PC-3 (cell line): ENCODE measurements at regions of chr2 and their contacts with region 1.

Region 1: DNA sequence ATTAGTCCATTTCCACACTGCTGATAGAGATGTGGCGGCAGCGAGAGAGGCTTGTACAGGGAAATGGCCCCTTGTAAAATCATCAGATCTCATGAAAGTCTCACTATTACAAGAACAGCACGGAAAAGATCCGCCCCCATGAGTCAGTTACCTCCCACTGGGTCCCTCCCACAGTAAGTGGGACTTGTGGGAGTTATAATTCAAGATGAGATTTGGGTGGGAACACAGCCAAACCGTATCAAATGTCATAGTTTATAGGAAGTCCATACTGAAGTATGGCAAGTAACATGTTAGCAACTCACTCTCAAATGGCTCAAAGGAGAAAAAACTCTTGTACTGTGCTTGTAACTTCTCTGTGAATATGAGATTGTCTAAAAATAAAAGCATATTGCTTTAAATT is 56.1 kb downstream of the FARP2 start:
- DNase-seq: peak; percentile 93
- ATAC-seq: peak; percentile 78
- H3K4me3 ChIP-seq: no peak overlapping the region
- H3K27ac ChIP-seq: peak overlapping the region; percentile 94
- H3K4me1 ChIP-seq: peaks cover 29% of the 10 kb centered on the region
- H3K27me3 ChIP-seq: no peaks in the 10 kb centered on the region
- CTCF ChIP-seq: no peak

Region 2: GRCh38 chr2:241324775-241325174 is 87.4 kb before region 1 on chr2:
- CTCF ChIA-PET with region 1: no interaction called
- POLR2A ChIA-PET with region 1: no interaction called
- intact Hi-C with region 1: no loop called
- DNase-seq: no peak
- ATAC-seq: no peak
- H3K4me3 ChIP-seq: no peak overlapping the region
- H3K27ac ChIP-seq: no peak overlapping the region
- H3K4me1 ChIP-seq: 0 out of 2 replicates have a peak, but pooled peaks cover 6% of the 10 kb centered on the region
- H3K27me3 ChIP-seq: no peaks in the 10 kb centered on the region
- CTCF ChIP-seq: no peak

Region 3: GRCh38 chr2:241375300-241375699 is 36.8 kb before region 1 on chr2:
- CTCF ChIA-PET with region 1: no interaction called
- POLR2A ChIA-PET with region 1: no interaction called
- intact Hi-C with region 1: loop called (anchors 1 kb)
- DNase-seq: peak; percentile 27
- ATAC-seq: peak; percentile 64
- H3K4me3 ChIP-seq: no peak overlapping the region
- H3K27ac ChIP-seq: 0 out of 2 replicates have a peak overlapping the region, but pooled peaks have one; percentile 22
- H3K4me1 ChIP-seq: peaks cover 19% of the 10 kb centered on the region
- H3K27me3 ChIP-seq: no peaks in the 10 kb centered on the region
- CTCF ChIP-seq: no peak